Panc1 (cell line): ENCODE measurements at regions of chr2 and their contacts with region 1.

Region 1: DNA sequence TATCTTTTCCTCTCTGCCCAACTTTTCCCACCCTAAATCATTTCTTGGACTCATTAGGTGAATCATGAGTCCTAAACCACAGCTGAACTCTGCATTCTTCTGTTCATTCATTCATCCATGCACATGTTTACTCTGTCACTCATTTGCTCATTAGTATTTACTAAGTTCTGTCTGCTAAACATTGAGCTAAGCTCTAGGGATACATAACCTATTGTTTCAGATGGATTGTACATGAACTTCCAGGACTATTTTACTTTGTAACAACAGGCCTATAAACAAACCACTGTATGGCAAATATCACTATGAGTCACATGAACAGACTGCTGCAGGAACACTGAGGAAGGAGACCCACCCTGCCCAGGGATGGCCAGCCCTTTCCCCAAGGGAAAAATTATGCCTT is 14.6 kb upstream of the DYNC2LI1 start:
- DNase-seq: peak; percentile 88
- ATAC-seq: peak; percentile 95
- H3K4me3 ChIP-seq: no peak overlapping the region
- H3K27ac ChIP-seq: peak overlapping the region; percentile 77
- H3K4me1 ChIP-seq: peaks cover 18% of the 10 kb centered on the region
- H3K27me3 ChIP-seq: no peaks in the 10 kb centered on the region
- CTCF ChIP-seq: no peak

Region 2: GRCh38 chr2:43729491-43730174 is 29.6 kb before region 1 on chr2:
- CTCF ChIA-PET with region 1: no interaction called
- POLR2A ChIA-PET with region 1: interaction called, 10 read pairs
- in situ Hi-C with region 1: no loop called
- intact Hi-C with region 1: no loop called
- DNase-seq: no peak
- ATAC-seq: no peak
- H3K4me3 ChIP-seq: no peak overlapping the region
- H3K27ac ChIP-seq: no peak overlapping the region
- H3K4me1 ChIP-seq: no peaks in the 10 kb centered on the region
- H3K27me3 ChIP-seq: no peaks in the 10 kb centered on the region
- CTCF ChIP-seq: no peak

Region 3: GRCh38 chr2:44112071-44112470 is 352.9 kb after region 1 on chr2:
- CTCF ChIA-PET with region 1: no interaction called
- POLR2A ChIA-PET with region 1: no interaction called
- in situ Hi-C with region 1: no loop called
- intact Hi-C with region 1: no loop called
- DNase-seq: no peak
- ATAC-seq: no peak
- H3K4me3 ChIP-seq: no peak overlapping the region
- H3K27ac ChIP-seq: no peak overlapping the region
- H3K4me1 ChIP-seq: no peaks in the 10 kb centered on the region
- H3K27me3 ChIP-seq: no peaks in the 10 kb centered on the region; the same call in 1 of the 2 replicates
- CTCF ChIP-seq: no peak